Activated T-helper 2 cell treated with anti-CD3 and anti-CD28 coated beads, Interferon-gamma antibody, Interleukin-2, Interleukin-4, amounts not matched to agents 10 μg/mL and 5 μg/mL and 100 μg/mL, durations not matched to agents 14 hours and 24 hours and 36 hours (primary cell): ENCODE measurements at regions of chr1 and their contacts with region 1.

Region 1: DNA sequence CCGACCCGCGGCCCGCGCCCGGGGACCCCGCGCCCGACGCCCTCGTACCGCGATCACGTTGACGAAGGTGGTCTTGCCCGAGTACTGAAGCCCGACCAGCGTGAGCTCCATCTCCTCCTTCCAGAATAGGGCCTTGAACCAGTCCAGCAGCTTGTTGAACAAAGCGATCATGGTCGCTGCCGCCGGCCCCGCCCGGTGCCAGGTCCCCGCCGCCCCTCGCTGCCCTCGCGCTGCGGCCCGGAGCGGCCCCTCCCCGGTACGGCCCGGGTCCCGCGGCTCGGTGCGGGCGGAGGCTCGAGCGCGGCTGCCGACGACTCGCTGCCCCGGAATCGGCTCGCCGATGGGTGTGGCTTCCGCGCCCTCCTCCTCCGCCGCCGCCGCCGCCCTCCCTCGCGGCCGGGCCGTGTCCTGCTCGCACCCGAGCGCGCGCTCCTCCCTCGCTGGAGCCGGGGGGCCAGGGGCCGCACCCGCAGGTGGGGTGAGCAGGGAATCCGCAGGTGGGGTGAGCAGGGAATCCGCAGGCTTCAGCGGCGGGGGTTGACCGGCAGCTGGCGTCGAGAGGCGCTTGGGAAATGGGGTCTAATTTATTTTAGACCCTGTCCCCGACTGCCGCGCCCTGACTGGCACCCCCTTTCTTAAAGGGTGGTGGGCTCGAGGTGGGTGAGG is at the start of gene ARL8A:
- DNase-seq: peak; percentile 71
- H3K4me3 Mint-ChIP-seq: peak within 1 kb of the TSS; percentile 91
- H3K27ac Mint-ChIP-seq: peak within 1 kb of the TSS; percentile 92
- H3K4me1 Mint-ChIP-seq: peaks cover 29% of the 10 kb centered on the region
- H3K27me3 Mint-ChIP-seq: no peaks in the 10 kb centered on the region
- total RNA-seq, gene ARL8A: 57.9 and 64.7 TPM in 2 replicates

Region 2: GRCh38 chr1:201709564-201710295 is 434.8 kb before region 1 on chr1:
- intact Hi-C with region 1: no loop called
- DNase-seq: peak; percentile 31
- H3K4me3 Mint-ChIP-seq: no peak overlapping the region
- H3K27ac Mint-ChIP-seq: no peak overlapping the region
- H3K4me1 Mint-ChIP-seq: peaks cover 2% of the 10 kb centered on the region
- H3K27me3 Mint-ChIP-seq: no peaks in the 10 kb centered on the region

Region 3: GRCh38 chr1:201877877-201878401 is 266.6 kb before region 1 on chr1:
- intact Hi-C with region 1: loop called (anchors 5 kb)
- DNase-seq: no peak
- H3K4me3 Mint-ChIP-seq: no peak overlapping the region
- H3K27ac Mint-ChIP-seq: no peak overlapping the region
- H3K4me1 Mint-ChIP-seq: no peaks in the 10 kb centered on the region
- H3K27me3 Mint-ChIP-seq: no peaks in the 10 kb centered on the region

Region 4: GRCh38 chr1:202160377-202160940 is 15.9 kb after region 1 on chr1 and contains the start of gene PTPN7:
- intact Hi-C with region 1: loop called (anchors 1 kb)
- DNase-seq: peak; percentile 58
- H3K4me3 Mint-ChIP-seq: peak within 1 kb of the TSS; percentile 100
- H3K27ac Mint-ChIP-seq: peak within 1 kb of the TSS; percentile 99
- H3K4me1 Mint-ChIP-seq: peaks cover 61% of the 10 kb centered on the region
- H3K27me3 Mint-ChIP-seq: no peaks in the 10 kb centered on the region
- total RNA-seq, gene PTPN7: 388 and 398 TPM in 2 replicates